MCF 10A (cell line): ENCODE measurements at regions of chr9 and their contacts with region 1.

Region 1: DNA sequence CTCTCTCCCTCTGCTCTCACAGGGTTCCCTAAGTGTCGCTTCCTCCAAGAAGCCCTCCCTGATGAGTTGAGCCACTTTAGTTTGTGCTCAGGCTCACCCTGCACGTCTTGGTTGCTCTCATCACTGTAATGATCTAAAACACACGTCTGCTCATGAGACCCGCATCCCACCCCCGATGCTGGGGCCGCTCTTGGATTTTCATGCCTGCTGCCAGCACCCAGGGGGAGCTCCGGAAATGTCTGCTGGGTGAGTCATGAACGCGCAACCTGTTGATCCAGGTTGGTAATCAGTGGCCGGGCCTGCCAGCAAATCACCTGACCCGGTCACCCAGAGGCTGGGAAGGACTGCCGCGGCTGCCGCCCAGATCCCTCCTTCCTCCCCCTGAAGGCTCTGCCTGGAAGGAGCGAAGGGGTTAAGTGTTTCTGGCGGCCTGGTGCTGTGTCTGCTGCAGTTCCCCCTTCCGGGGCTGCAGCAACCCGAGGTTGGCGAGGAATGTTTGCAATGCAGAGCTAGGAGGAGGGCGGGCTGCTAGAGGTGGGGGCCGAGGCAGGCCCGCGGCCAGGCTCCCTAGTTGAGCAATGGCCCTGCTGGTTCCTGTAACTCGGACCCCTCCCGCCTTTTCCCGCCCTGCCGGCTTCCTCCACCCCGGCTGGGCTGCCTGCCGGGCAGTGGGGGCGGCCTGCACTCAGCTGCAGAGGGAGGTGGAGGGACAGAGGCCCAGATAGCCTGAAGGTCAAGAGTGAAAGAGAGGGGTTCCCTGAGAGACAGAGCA is 156.1 kb upstream of the IER5L start:
- DNase-seq: peak; percentile 98
- H3K4me3 Mint-ChIP-seq: peak overlapping the region; percentile 71
- H3K27ac Mint-ChIP-seq: peak overlapping the region; percentile 97
- H3K4me1 Mint-ChIP-seq: peaks cover 19% of the 10 kb centered on the region
- H3K27me3 Mint-ChIP-seq: no peaks in the 10 kb centered on the region
- CTCF ChIP-seq: no peak

Region 2: DNA sequence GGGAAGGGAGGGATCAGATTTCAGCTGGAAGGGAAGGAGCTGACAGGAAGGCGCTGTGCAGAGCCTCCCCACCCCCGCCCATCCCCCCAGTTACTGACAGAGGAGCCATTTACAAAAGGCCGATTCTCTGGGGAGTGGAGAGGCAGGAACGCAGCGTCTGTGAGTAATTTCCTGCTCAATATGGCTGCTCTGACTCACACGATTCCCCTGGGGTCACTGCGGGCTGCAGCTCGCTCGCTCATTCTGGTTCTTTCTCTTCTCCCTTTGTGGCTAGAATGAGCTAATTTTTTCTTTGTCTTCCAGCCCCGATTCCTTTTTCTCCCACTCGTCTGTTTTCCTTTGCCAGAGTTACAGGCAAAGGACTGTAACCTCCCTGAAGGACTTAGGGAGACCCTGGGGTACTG is 194.1 kb before region 1 on chr9:
- CTCF ChIA-PET with region 1: interaction called, 3 read pairs
- POLR2A ChIA-PET with region 1: interaction called, 51 read pairs
- intact Hi-C with region 1: loop called (anchors 1 kb)
- DNase-seq: peak; percentile 99
- H3K4me3 Mint-ChIP-seq: peak overlapping the region; percentile 74
- H3K27ac Mint-ChIP-seq: peak overlapping the region; percentile 97
- H3K4me1 Mint-ChIP-seq: peaks cover 30% of the 10 kb centered on the region
- H3K27me3 Mint-ChIP-seq: no peaks in the 10 kb centered on the region
- CTCF ChIP-seq: no peak

Region 3: DNA sequence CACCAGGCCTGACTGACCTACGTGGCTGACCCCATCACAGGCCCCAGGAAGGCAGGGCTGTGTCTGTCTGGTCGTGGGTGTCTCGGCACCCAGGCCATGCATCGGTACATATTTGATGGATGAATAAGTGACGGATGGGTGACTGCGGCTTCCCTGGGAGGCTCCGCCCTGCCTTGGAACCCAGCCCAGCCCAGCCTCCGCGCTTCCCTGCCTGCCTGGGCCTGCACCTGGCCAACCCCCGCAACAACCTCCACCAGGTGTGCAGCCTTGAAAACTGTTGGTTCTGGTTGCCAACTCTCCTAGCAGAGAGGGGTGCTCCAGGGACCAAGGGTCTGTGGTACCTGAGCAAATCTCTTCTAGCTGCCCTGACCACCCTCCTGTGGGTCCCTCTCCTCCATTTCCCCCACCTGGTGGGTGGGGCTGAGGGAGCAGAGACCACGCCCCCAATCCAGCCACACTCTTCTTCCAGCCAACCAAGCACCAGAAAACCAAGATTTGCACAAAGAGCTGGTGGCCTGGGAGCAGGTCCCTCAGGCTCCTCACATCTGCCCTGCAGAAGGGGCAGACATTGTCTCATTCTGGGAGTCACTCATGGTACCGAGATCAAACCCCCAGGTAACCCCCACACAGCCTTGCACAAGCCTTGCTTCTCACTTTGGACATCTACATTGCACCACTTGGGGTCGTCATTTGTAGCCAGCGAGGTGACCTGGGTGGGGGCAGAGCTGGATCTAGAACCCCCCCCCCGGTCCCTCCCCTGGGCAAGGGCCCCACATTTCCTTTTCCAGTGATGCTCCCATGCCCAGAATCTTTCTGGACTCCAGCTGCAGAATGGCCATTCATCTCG is 55.5 kb before region 1 on chr9:
- CTCF ChIA-PET with region 1: interaction called, 5 read pairs
- POLR2A ChIA-PET with region 1: interaction called, 20 read pairs
- intact Hi-C with region 1: no loop called
- DNase-seq: peak; percentile 85
- H3K4me3 Mint-ChIP-seq: peak overlapping the region; percentile 50
- H3K27ac Mint-ChIP-seq: peak overlapping the region; percentile 76
- H3K4me1 Mint-ChIP-seq: peaks cover 35% of the 10 kb centered on the region
- H3K27me3 Mint-ChIP-seq: no peaks in the 10 kb centered on the region
- CTCF ChIP-seq: no peak

Region 4: DNA sequence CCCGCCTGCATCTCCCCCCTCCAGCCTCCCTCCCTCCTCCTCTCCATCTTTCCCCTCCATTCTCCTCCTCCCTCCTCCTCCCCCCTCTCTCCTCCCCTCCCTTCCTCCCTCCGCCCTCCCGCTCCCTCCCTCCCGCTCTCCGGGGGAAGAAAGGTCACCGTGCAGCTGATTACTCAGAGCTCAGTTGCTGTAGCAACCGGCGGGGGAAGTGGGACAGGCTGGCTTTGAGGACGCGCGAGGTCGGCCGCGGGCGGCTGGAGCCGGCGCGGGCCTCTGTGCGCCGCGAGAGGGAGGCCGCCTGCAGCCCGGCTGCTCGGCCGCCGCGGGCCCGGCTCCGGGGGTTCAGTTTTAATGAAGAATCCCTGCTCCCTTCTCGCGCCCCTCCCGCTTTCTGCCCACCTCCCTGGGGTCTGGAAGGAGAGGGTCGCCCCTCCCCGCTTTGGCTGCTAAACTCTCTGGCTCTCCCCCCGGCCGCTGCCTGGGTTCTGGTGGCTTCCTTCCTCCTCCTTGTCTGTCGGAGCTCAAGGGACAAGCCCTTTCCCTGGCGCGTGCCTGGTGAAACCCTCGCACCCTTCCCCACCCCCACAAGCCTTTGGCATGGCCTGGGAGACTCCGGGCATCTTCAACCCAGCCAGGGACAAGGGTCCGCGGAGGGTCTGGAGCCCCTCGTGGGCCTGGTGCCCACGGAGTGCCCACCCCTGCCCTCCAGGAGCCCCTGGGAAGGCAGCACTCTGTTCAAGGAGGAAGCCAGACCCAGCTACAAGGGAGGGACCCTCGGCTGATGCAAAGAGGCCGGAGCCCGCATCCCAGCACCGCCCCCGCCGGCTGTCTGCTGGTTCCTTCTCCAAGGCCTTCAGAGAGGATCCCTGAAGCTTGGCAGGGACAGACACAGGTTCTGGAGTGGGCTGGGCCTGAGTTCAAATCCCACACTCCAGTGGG is 126.5 kb after region 1 on chr9:
- CTCF ChIA-PET with region 1: interaction called, 4 read pairs
- POLR2A ChIA-PET with region 1: interaction called, 11 read pairs
- intact Hi-C with region 1: no loop called
- DNase-seq: peak; percentile 97
- H3K4me3 Mint-ChIP-seq: peak overlapping the region; percentile 64
- H3K27ac Mint-ChIP-seq: peak overlapping the region; percentile 86
- H3K4me1 Mint-ChIP-seq: peaks cover 7% of the 10 kb centered on the region
- H3K27me3 Mint-ChIP-seq: no peaks in the 10 kb centered on the region
- CTCF ChIP-seq: no peak

Region 5: DNA sequence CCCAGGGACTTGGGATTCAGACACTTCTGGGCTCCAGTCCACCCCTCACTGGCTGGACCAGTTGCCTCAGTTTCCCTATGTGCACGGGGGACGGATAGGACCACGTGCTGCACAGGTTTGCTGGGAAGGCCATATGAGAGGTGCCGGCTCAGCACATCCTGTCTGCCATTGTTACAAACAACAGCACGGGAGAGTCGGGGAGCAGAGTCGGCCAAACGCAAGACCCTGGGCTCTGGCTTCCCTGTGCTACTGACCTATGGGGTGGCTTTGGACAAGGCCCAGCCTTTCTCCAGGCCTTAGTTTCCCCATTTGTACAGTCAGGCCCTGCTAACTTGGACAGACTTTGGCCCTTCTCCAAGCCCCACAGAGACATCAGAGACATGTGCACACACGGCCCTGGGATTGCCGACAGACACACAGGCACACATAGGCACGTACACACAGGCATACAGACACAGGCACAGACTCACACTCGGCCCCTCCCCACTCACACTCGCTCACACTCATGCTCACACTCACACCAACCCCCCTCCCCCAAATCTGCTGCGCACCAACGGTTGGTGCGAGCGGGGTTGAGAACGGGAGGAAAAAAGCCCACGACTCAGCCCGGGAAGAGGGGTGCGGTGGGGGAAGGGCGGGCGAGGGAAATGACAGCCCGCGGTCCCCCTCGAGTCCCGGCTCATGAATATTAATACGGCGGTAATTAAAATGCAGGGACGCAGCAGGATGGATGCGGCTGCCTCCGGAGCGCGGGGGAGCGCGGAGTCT is 153.7 kb after region 1 on chr9:
- CTCF ChIA-PET with region 1: interaction called, 3 read pairs
- POLR2A ChIA-PET with region 1: interaction called, 80 read pairs
- intact Hi-C with region 1: loop called (anchors 5 kb)
- DNase-seq: peak; percentile 70
- H3K4me3 Mint-ChIP-seq: peak overlapping the region; percentile 69
- H3K27ac Mint-ChIP-seq: peak overlapping the region; percentile 93
- H3K4me1 Mint-ChIP-seq: peaks cover 59% of the 10 kb centered on the region
- H3K27me3 Mint-ChIP-seq: no peaks in the 10 kb centered on the region
- CTCF ChIP-seq: no peak

Region 6: GRCh38 chr9:129610473-129611301 is 276.5 kb after region 1 on chr9:
- CTCF ChIA-PET with region 1: interaction called, 3 read pairs
- POLR2A ChIA-PET with region 1: interaction called, 4 read pairs
- intact Hi-C with region 1: loop called (anchors 5 kb)
- DNase-seq: peak; percentile 66
- H3K4me3 Mint-ChIP-seq: peak overlapping the region; percentile 75
- H3K27ac Mint-ChIP-seq: no peak overlapping the region
- H3K4me1 Mint-ChIP-seq: peaks cover 13% of the 10 kb centered on the region
- H3K27me3 Mint-ChIP-seq: no peaks in the 10 kb centered on the region
- CTCF ChIP-seq: peak; percentile 88

Region 7: DNA sequence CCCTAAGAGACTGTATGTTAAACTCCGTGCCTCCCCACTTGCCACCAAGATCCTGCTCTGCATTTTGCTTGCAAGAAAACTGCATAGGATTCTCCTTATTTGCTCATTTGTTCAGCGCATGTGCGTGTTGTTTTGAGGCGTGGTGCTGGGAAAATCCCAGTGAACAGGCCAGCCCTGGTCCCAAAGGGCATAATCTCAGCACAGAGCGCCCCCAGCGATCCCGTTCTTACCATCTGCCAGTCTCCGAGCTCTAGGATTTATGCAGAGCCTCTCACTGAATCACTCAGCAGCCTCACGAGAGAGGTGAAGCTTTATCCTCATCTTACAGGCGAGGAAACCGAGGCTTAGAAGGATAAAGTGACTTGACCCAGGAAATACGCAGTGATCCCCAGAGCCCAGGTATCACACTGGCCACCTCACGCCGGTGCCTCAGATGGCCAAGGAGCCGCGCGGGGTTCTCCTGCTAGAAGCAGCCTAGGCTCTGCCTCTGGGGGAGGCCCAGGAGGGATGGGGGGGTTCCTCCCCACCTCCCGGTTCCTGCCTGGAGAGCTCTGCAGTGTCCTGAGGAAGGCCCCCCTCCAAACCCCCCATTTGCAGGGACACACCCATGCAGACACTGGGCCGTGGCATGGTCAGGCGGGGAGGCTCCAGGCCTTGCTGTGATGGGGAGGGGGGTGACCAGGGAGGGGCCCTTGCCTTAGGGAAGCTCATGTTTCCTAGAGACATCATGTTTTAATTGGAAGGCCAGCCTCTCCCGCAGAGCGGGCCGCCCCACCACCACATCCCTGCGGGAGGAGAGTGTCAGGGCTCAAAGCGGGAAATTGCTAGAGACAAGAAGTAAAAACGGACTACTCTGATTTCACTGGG is 343.1 kb after region 1 on chr9:
- CTCF ChIA-PET with region 1: no interaction called
- POLR2A ChIA-PET with region 1: no interaction called
- intact Hi-C with region 1: no loop called
- DNase-seq: no peak
- H3K4me3 Mint-ChIP-seq: no peak overlapping the region
- H3K27ac Mint-ChIP-seq: no peak overlapping the region
- H3K4me1 Mint-ChIP-seq: no peaks in the 10 kb centered on the region
- H3K27me3 Mint-ChIP-seq: peaks cover 56% of the 10 kb centered on the region
- CTCF ChIP-seq: no peak